ENCODE measurements at regions of chr5 and their contacts with region 1.

Region 1: GRCh38 chr5:73902327-73903051 is 276.5 kb downstream of the ARHGEF28 start:
- DNase-seq: no peak
- H3K4me3 ChIP-seq: no peak overlapping the region
- H3K27ac ChIP-seq: no peak overlapping the region
- H3K4me1 ChIP-seq: no peaks in the 10 kb centered on the region
- H3K27me3 ChIP-seq: no peaks in the 10 kb centered on the region
- CTCF ChIP-seq: peak; percentile 81 to 86 (median 82)

Region 2: DNA sequence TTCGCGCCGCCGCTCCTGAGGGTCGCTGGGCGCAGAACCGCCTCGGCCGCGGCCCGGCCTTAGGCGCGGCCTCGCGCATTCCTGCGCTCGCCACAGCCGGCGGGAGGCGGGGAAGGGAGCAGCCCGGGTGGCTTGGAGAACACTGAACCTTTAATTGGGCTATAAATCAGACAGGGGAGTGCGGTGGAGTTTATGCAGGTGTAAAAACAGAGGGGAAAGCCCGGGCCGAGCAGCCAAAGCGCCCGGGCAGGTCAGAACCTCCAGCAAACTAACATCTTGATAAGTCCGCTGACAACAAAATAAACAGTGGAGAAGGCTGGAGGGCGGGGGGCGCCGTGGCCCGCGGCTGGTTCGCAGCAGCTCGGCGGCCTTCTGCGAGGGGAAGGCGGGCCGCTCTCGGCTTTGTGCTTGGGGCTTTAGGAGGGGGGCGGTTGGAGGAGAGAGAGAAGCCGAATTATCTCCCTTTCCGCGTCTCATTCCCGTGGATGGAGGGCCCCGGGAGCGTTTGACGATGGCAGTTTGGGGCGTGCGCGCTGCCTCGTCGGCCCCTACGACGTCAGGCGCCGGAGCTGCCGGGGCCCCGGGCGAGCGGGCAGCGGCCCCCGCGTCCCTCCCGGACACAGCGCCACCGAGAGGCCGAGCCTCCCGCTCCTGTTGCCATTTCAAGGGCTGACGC is 465.2 kb before region 1 on chr5:
- intact Hi-C with region 1: no loop called
- DNase-seq: peak in 1 of 2 donors; percentile 79
- H3K4me3 ChIP-seq: peak overlapping the region; percentile 44 to 61
- H3K27ac ChIP-seq: peak overlapping the region; percentile 86
- H3K4me1 ChIP-seq: peaks cover 4 to 17% of the 10 kb centered on the region in 2 donors
- H3K27me3 ChIP-seq: no peaks in the 10 kb centered on the region
- CTCF ChIP-seq: peak; percentile 30 to 77 (median 59)

Region 3: GRCh38 chr5:73928476-73928875 is 26.0 kb after region 1 on chr5:
- intact Hi-C with region 1: no loop called
- DNase-seq: no peak
- H3K4me3 ChIP-seq: no peak overlapping the region
- H3K27ac ChIP-seq: peak overlapping the region in 1 of 2 donors; percentile 25
- H3K4me1 ChIP-seq: peaks cover 0 to 4% of the 10 kb centered on the region in 2 donors
- H3K27me3 ChIP-seq: no peaks in the 10 kb centered on the region
- CTCF ChIP-seq: no peak

Region 4: GRCh38 chr5:74201334-74202081 is 299.0 kb after region 1 on chr5:
- intact Hi-C with region 1: loop called (anchors 10 kb)
- DNase-seq: no peak
- H3K4me3 ChIP-seq: no peak overlapping the region
- H3K27ac ChIP-seq: peak overlapping the region in 1 of 2 donors; percentile 1
- H3K4me1 ChIP-seq: peaks cover 0 to 18% of the 10 kb centered on the region in 2 donors
- H3K27me3 ChIP-seq: no peaks in the 10 kb centered on the region
- CTCF ChIP-seq: no peak

Region 5: DNA sequence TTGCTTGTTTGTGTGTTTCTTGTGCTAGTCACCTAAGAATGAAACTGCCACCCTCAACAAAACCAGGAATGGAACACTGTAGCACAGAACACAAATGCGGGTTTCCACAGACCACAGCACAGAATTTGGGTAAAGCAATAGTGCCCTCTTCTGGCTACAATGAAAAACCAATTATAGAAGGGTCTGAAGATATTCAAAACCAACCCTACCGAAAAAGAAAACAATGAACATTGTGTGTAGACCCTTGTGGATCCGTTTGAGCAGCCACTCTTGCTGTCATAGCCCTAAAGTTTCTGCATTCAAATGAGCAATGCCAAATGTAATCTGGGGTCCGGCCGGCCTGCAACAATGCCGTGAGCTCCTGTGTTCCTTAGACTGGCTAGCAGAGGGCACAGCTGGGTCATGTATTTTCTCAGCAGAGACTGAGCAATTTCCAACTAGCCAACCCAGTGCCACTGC is 746.4 kb after region 1 on chr5:
- intact Hi-C with region 1: loop called (anchors 1 kb)
- DNase-seq: no peak
- H3K4me3 ChIP-seq: peak overlapping the region in 1 of 2 donors; percentile 22
- H3K27ac ChIP-seq: no peak overlapping the region
- H3K4me1 ChIP-seq: peaks cover 0 to 18% of the 10 kb centered on the region in 2 donors
- H3K27me3 ChIP-seq: no peaks in the 10 kb centered on the region
- CTCF ChIP-seq: peak; percentile 62 to 76 (median 64)

Region 6: DNA sequence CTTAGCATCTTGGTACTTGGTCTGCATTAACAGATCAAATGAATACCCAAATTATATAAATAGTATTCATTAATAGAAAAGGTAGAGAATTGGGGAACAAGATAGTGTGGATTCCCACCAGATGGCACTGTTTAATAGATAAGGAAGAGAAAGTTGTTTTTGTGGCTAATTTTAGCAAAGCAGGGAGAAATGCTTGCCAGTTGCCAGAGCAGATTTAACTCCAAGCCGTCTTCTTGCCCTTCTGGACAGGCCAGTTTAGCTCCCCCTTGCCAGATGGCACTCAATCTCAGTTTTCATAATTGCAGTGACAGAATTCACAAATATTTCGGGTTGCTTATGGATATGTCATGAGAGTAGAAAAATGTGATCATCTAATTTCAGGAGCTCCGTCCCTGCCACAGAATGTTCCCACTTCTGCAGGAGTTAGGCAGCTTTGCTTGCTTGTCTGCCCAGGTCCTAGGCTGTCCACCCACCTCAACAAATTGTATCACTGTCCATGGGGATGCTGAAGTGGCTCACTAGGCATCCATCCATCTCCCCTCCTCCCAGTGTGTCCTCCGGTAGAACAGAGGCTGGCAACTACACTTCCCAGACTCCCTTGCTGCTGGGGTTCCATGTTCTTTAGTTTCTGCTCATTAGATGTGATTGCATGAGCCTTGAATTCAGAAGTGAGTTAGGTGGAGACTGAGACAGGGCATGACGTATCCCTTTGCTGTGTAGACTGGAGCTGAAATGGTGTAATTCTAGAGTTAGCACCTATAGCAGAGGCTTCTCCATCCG is 770.7 kb after region 1 on chr5:
- intact Hi-C with region 1: no loop called
- DNase-seq: no peak
- H3K4me3 ChIP-seq: peak overlapping the region; percentile 35 to 49
- H3K27ac ChIP-seq: peak overlapping the region; percentile 33 to 57
- H3K4me1 ChIP-seq: peaks cover 0 to 14% of the 10 kb centered on the region in 2 donors
- H3K27me3 ChIP-seq: no peaks in the 10 kb centered on the region
- CTCF ChIP-seq: peak in 2 of 3 experiments; percentile 40 to 54